HEK293 (cell line): ENCODE measurements at regions of chr12 and their contacts with region 1.

Region 1: GRCh38 chr12:65878544-65878943 is 54.3 kb downstream of the HMGA2 start:
- H3K4me3 ChIP-seq: no peak overlapping the region
- H3K27ac ChIP-seq: no peak overlapping the region
- H3K4me1 ChIP-seq: peaks cover 50% of the 10 kb centered on the region
- CTCF ChIP-seq: peak; percentile 22; the same call in 1 of the 2 replicates

Region 2: DNA sequence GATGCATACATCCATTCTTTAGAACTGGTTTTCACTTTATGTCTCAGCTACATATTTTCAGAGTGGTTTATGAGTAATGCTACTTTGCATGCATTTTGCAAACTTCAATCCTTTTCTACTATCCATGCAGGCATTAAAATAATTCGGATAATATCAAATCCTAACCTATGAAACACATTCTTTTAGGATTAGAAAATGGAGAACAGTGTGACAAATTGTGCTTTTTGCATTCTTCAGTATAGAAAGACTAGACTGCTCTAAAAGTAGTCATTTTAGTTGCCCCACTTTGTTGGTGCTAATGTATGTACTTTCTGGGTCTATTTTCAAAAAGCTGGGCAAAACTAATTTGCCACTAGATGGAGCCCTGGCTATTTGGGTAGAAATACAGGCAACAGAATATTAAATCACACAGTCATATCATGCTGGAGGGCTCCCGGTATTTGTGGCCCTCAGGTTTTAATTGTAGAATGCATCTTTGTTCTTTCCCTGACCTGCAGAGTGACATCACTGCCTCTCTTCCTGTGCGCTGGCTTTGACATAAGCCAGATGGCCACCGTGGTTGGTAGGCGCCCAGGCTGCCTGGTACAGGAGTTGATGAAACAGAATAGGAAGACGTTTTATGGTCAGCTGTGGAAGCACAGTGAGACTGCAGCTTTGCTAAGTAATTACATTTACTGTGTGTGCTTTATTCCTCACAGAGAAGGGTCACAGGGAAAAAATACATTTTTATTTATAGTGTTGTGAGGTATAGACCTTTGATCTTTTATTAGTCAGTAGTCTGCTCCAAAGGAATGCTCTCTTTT is 572.0 kb before region 1 on chr12:
- CTCF ChIA-PET with region 1: interaction called, 10 read pairs
- POLR2A ChIA-PET with region 1: no interaction called
- H3K4me3 ChIP-seq: no peak overlapping the region
- H3K27ac ChIP-seq: no peak overlapping the region
- H3K4me1 ChIP-seq: 0 out of 2 replicates have a peak, but pooled peaks cover 3% of the 10 kb centered on the region
- CTCF ChIP-seq: no peak; the same call in 1 of the 2 replicates

Region 3: DNA sequence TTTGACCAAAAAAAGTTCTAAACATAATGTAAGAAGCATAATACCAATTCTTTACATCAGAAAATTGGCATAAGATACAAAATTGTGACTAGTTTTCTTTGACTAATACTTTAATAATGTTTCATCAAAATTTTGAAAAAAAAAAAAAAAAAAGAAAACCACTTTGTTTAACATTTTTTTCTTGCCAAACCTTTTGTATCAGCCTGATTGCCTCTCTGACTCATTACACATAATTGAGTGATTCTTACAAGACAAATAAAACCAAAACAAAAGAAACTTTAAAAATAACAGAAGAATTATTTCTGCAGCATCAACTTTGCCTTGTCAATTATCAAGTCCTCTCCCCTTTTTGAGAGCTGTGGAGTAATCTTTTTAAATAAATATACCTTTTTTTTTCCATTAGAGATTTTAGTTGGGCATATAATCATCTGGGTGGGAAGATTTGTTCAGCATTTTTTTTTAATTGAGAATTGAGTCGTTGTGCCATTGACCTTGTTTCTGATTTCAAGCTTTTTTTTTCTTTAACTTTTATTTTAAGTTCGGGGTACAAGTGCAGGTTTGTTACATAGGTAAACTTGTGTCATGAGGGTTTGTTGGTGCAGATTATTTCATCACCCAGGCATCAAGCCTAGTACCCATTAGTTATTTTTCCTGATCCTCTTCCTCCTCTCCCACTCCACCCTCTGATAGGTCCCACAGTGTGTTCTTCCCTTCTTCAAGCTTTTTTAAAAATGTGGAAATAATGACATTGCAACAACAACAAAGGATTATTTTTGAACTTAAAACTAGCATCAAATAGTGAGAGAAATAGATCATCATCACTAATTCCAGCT is 100.1 kb before region 1 on chr12:
- CTCF ChIA-PET with region 1: no interaction called
- POLR2A ChIA-PET with region 1: no interaction called
- H3K4me3 ChIP-seq: no peak overlapping the region
- H3K27ac ChIP-seq: no peak overlapping the region
- H3K4me1 ChIP-seq: 0 out of 2 replicates have a peak, but pooled peaks cover 2% of the 10 kb centered on the region
- CTCF ChIP-seq: no peak